CD14-positive monocyte (primary cell): ENCODE measurements at regions of chr9 and their contacts with region 1.

Region 1: GRCh38 chr9:136118320-136119060 is at the start of gene TMEM250:
- DNase-seq: peak; percentile 96 to 99 (median 96)
- H3K4me3 ChIP-seq: peak within 1 kb of the TSS; percentile 48 to 86 (median 79)
- H3K4me3 Mint-ChIP-seq: peak within 1 kb of the TSS; percentile 70 to 77
- H3K27ac ChIP-seq: peak within 1 kb of the TSS; percentile 22 to 84
- H3K27ac Mint-ChIP-seq: peak within 1 kb of the TSS in 6 of 7 donors; percentile 56 to 87 (median 78)
- H3K4me1 ChIP-seq: peaks cover 23 to 46% of the 10 kb centered on the region in 2 donors
- H3K4me1 Mint-ChIP-seq: peaks cover 23% of the 10 kb centered on the region
- H3K27me3 ChIP-seq: peaks cover 0 to 3% of the 10 kb centered on the region in 2 donors
- H3K27me3 Mint-ChIP-seq: peaks cover 0 to 4% (median 0%) of the 10 kb centered on the region in 3 donors
- CTCF ChIP-seq: no peak
- polyA plus RNA-seq, gene TMEM250: 11.0 to 38.0 (median 30.9) TPM

Region 2: DNA sequence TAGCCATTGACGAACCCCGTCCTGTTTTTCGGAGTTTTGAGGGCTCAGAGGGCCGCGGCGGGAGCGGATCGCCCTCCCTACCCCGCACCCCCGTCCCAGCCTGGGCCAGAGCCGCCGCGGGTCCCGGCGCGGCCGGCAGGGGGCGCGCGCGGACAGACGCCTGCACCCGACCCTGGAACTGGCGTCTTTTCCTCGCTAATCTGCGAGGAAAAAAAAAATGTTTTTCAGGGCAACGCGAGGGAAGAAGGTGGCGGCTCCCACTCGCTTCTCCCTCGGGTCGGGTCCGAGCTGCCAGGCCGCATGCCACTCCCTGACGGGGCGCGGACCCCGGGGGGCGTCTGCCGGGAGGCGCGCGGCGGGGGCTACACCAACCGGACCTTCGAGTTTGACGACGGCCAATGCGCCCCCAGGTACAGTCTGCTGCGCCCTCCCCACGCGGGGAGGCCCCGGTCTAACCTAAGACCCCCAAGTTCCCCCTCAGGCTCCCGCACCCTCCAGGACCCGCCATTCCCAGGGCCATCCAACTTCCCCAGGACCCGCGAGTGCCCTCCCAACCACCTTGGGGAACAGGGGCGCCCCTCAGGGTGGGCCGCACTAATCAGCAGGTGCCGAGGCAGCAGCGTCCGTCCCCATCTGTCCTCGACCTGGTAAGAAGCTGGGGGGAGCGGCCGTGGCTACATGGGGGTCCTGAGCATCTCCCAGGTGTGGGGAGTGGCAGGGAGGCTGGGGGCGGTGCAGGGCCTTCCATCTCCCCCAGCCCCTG is 416.4 kb before region 1 on chr9 and contains the start of gene KCNT1:
- intact Hi-C with region 1: loop called in 1 of 2 experiments (anchors 10 kb)
- DNase-seq: peak in 2 of 3 donors; percentile 9 to 20
- H3K4me3 ChIP-seq: no peak within 1 kb of the TSS
- H3K4me3 Mint-ChIP-seq: no peak within 1 kb of the TSS
- H3K27ac ChIP-seq: no peak within 1 kb of the TSS
- H3K27ac Mint-ChIP-seq: no peak within 1 kb of the TSS
- H3K4me1 ChIP-seq: no peaks in the 10 kb centered on the region
- H3K4me1 Mint-ChIP-seq: no peaks in the 10 kb centered on the region
- H3K27me3 ChIP-seq: peaks cover 0 to 8% of the 10 kb centered on the region in 2 donors
- H3K27me3 Mint-ChIP-seq: peaks cover 5 to 26% (median 7%) of the 10 kb centered on the region in 3 donors
- CTCF ChIP-seq: peak; percentile 90
- polyA plus RNA-seq, gene KCNT1: not detected

Region 3: GRCh38 chr9:135797507-135798262 is 320.8 kb before region 1 on chr9:
- intact Hi-C with region 1: loop called in 1 of 2 experiments (anchors 5 kb)
- DNase-seq: peak in 1 of 3 donors; percentile 17
- H3K4me3 ChIP-seq: no peak overlapping the region
- H3K4me3 Mint-ChIP-seq: no peak overlapping the region
- H3K27ac ChIP-seq: no peak overlapping the region
- H3K27ac Mint-ChIP-seq: peak overlapping the region in 1 of 7 donors; percentile 75
- H3K4me1 ChIP-seq: no peaks in the 10 kb centered on the region
- H3K4me1 Mint-ChIP-seq: peaks cover 2% of the 10 kb centered on the region
- H3K27me3 ChIP-seq: no peaks in the 10 kb centered on the region
- H3K27me3 Mint-ChIP-seq: peaks cover 0 to 4% (median 1%) of the 10 kb centered on the region in 3 donors
- CTCF ChIP-seq: peak; percentile 66

Region 4: GRCh38 chr9:135864447-135865049 is 253.9 kb before region 1 on chr9:
- intact Hi-C with region 1: loop called (anchors 2 kb)
- DNase-seq: peak; percentile 29 to 58 (median 47)
- H3K4me3 ChIP-seq: no peak overlapping the region
- H3K4me3 Mint-ChIP-seq: no peak overlapping the region
- H3K27ac ChIP-seq: no peak overlapping the region
- H3K27ac Mint-ChIP-seq: peak overlapping the region in 2 of 7 donors; percentile 41 to 77
- H3K4me1 ChIP-seq: no peaks in the 10 kb centered on the region
- H3K4me1 Mint-ChIP-seq: peaks cover 5% of the 10 kb centered on the region
- H3K27me3 ChIP-seq: no peaks in the 10 kb centered on the region
- H3K27me3 Mint-ChIP-seq: peaks cover 0 to 1% (median 0%) of the 10 kb centered on the region in 3 donors
- CTCF ChIP-seq: peak; percentile 91

Region 5: GRCh38 chr9:135939351-135940265 is 178.9 kb before region 1 on chr9:
- intact Hi-C with region 1: no loop called
- DNase-seq: no peak
- H3K4me3 ChIP-seq: no peak overlapping the region
- H3K4me3 Mint-ChIP-seq: no peak overlapping the region
- H3K27ac ChIP-seq: no peak overlapping the region
- H3K27ac Mint-ChIP-seq: peak overlapping the region in 2 of 7 donors; percentile 61 to 72
- H3K4me1 ChIP-seq: no peaks in the 10 kb centered on the region
- H3K4me1 Mint-ChIP-seq: no peaks in the 10 kb centered on the region
- H3K27me3 ChIP-seq: no peaks in the 10 kb centered on the region
- H3K27me3 Mint-ChIP-seq: no peaks in the 10 kb centered on the region
- CTCF ChIP-seq: no peak

Region 6: GRCh38 chr9:135961277-135961705 is 157.2 kb before region 1 on chr9 and contains the start of gene UBAC1:
- intact Hi-C with region 1: loop called (anchors 2 kb)
- DNase-seq: peak; percentile 94 to 96 (median 95)
- H3K4me3 ChIP-seq: peak within 1 kb of the TSS; percentile 53 to 88 (median 64)
- H3K4me3 Mint-ChIP-seq: peak within 1 kb of the TSS; percentile 93 to 94
- H3K27ac ChIP-seq: peak within 1 kb of the TSS; percentile 63 to 91
- H3K27ac Mint-ChIP-seq: peak within 1 kb of the TSS; percentile 91 to 96 (median 94)
- H3K4me1 ChIP-seq: peaks cover 45 to 51% of the 10 kb centered on the region in 2 donors
- H3K4me1 Mint-ChIP-seq: peaks cover 47% of the 10 kb centered on the region
- H3K27me3 ChIP-seq: no peaks in the 10 kb centered on the region
- H3K27me3 Mint-ChIP-seq: peaks cover 1 to 3% (median 2%) of the 10 kb centered on the region in 3 donors
- CTCF ChIP-seq: peak; percentile 23
- polyA plus RNA-seq, gene UBAC1: 35.8 to 63.1 (median 52.5) TPM

Region 7: GRCh38 chr9:136079211-136079915 is 39.1 kb before region 1 on chr9:
- intact Hi-C with region 1: loop called in 1 of 2 experiments (anchors 5 kb)
- DNase-seq: peak; percentile 46 to 72 (median 53)
- H3K4me3 ChIP-seq: peak overlapping the region in 1 of 3 experiments; percentile 42
- H3K4me3 Mint-ChIP-seq: peak overlapping the region in 1 of 2 donors; percentile 68
- H3K27ac ChIP-seq: peak overlapping the region; percentile 33 to 68
- H3K27ac Mint-ChIP-seq: peak overlapping the region in 6 of 7 donors; percentile 56 to 88 (median 79)
- H3K4me1 ChIP-seq: peaks cover 78 to 95% of the 10 kb centered on the region in 2 donors
- H3K4me1 Mint-ChIP-seq: peaks cover 81% of the 10 kb centered on the region
- H3K27me3 ChIP-seq: no peaks in the 10 kb centered on the region
- H3K27me3 Mint-ChIP-seq: peaks cover 0 to 6% (median 0%) of the 10 kb centered on the region in 3 donors
- CTCF ChIP-seq: peak; percentile 29

Region 8: DNA sequence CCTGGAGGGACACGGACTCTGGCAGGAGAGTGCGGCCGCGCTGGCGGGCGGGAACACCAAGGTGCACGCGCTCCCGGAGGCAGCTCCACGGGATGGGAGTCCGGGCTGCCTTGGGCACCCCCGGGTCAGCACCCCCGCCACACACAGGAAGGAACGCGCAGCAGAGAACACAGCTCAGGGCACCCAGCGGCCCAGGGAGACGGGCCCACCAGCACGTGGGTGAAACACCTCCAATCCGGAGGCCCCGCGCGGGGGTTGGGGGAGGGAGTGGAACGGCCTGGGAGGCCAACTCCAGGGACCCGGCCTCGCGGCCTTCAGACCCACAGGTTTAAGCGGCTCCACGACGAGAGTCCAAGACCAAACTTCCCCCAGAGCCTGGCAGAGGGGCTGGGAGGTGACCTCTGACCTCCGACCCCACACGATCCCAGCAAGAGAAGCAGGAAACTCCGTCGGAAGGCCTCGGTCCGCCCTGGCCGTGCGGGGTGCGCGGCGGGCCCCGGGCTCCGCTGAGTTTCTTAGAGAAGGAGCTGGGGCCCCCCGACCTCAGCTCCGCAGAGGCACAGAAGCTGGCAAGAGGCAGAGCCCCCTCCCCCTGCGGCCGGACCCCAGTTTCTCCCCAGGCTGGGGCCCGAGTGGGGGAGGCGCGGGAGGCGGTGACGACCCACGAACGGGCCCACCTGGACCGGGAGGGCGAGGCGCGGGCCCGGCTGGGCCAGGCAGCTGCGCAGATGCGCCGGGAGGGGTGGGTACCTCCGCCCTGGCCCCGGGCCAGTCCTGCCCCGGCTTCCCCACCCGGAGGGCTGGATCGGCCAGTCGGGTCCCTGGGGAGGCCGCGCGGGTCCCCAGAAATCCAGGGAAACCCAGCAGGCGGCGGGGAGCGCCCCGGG is 24.3 kb before region 1 on chr9:
- intact Hi-C with region 1: loop called (anchors 2 to 5 kb)
- DNase-seq: peak; percentile 53 to 56 (median 54)
- H3K4me3 ChIP-seq: peak overlapping the region; percentile 56 to 90 (median 89)
- H3K4me3 Mint-ChIP-seq: peak overlapping the region; percentile 84 to 85
- H3K27ac ChIP-seq: peak overlapping the region; percentile 60 to 73
- H3K27ac Mint-ChIP-seq: peak overlapping the region in 6 of 7 donors; percentile 68 to 90 (median 78)
- H3K4me1 ChIP-seq: peaks cover 66 to 74% of the 10 kb centered on the region in 2 donors
- H3K4me1 Mint-ChIP-seq: peaks cover 59% of the 10 kb centered on the region
- H3K27me3 ChIP-seq: peaks cover 0 to 10% of the 10 kb centered on the region in 2 donors
- H3K27me3 Mint-ChIP-seq: peaks cover 9 to 15% (median 10%) of the 10 kb centered on the region in 3 donors
- CTCF ChIP-seq: no peak

Region 9: DNA sequence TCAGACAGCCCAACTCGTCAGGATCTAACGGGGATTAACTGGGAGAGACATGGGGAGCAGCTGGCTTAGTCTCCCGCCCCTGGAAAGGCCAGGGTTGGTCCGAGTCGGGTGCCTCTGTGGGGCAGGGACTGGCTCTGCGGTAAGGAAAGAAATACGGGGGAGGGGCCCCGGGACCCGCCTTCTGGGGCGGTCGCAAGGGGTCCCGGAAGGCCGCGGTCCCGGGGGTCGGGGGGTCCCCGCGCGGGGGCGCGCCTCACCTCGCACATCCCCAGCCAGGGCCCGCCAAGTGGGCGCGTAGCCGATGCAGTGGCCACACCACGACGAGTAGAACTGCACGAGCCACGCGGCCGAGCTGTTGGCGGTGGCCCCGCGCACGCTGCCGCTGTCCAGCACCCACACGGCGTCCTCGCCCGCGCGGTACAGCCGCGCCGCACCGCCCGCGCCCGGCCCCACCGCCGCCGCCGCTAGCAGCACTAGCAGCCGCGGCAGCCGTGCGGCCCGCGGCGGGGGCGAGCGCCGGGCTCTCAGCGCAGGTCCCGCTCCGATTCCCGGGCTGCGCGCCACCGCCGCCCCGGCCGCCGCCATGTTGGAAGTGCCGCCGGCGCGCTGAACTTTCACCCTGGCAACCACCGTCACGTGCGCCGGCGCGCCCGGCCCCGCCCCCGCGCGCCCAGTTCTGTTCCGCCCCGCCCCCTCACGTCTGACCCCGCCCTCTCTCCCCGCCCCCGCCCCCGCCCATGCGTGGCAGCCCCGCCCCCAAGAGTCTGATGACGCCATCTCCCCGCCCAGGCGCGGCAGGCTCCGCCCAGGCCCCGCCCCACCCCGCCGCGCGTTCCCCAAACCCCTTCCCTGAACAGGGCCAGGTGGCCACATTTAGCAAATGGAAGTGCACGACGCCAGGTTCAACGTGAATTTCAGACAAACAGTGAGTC is 127.0 kb after region 1 on chr9 and contains the start of gene QSOX2:
- intact Hi-C with region 1: no loop called
- DNase-seq: peak; percentile 75 to 89 (median 76)
- H3K4me3 ChIP-seq: peak within 1 kb of the TSS; percentile 36 to 82 (median 79)
- H3K4me3 Mint-ChIP-seq: peak within 1 kb of the TSS; percentile 81 to 89
- H3K27ac ChIP-seq: no peak within 1 kb of the TSS
- H3K27ac Mint-ChIP-seq: peak within 1 kb of the TSS in 5 of 7 donors; percentile 58 to 84 (median 78)
- H3K4me1 ChIP-seq: peaks cover 18 to 23% of the 10 kb centered on the region in 2 donors
- H3K4me1 Mint-ChIP-seq: peaks cover 38% of the 10 kb centered on the region
- H3K27me3 ChIP-seq: no peaks in the 10 kb centered on the region
- H3K27me3 Mint-ChIP-seq: peaks cover 6 to 9% (median 8%) of the 10 kb centered on the region in 3 donors
- CTCF ChIP-seq: no peak
- polyA plus RNA-seq, gene QSOX2: 0.03 to 8.4 (median 0.17) TPM